ENCODE measurements at regions of chr15 and their contacts with region 1.

Region 1: GRCh38 chr15:99704444-99704838 is 28.8 kb downstream of the LYSMD4 start:
- DNase-seq: peak; percentile 87
- ATAC-seq: peak; percentile 80
- H3K4me3 ChIP-seq: no peak overlapping the region
- H3K4me3 Mint-ChIP-seq: no peak overlapping the region
- H3K27ac ChIP-seq: peak overlapping the region in 1 of 2 donors; percentile 91
- H3K27ac Mint-ChIP-seq: no peak overlapping the region
- H3K4me1 ChIP-seq: peaks cover 15 to 18% of the 10 kb centered on the region in 2 donors
- H3K4me1 Mint-ChIP-seq: peaks cover 28% of the 10 kb centered on the region
- H3K27me3 ChIP-seq: no peaks in the 10 kb centered on the region
- H3K27me3 Mint-ChIP-seq: no peaks in the 10 kb centered on the region
- CTCF ChIP-seq: peak; percentile 76

Region 2: GRCh38 chr15:99275525-99276128 is 428.8 kb before region 1 on chr15:
- CTCF ChIA-PET with region 1: interaction called, 199 read pairs
- POLR2A ChIA-PET with region 1: interaction called, 7 read pairs
- intact Hi-C with region 1: loop called (anchors 1 kb)
- DNase-seq: peak; percentile 22
- ATAC-seq: peak; percentile 17
- H3K4me3 ChIP-seq: no peak overlapping the region
- H3K4me3 Mint-ChIP-seq: no peak overlapping the region
- H3K27ac ChIP-seq: no peak overlapping the region
- H3K27ac Mint-ChIP-seq: no peak overlapping the region
- H3K4me1 ChIP-seq: peaks cover 6 to 10% of the 10 kb centered on the region in 2 donors
- H3K4me1 Mint-ChIP-seq: peaks cover 11% of the 10 kb centered on the region
- H3K27me3 ChIP-seq: no peaks in the 10 kb centered on the region
- H3K27me3 Mint-ChIP-seq: no peaks in the 10 kb centered on the region
- CTCF ChIP-seq: no peak

Region 3: GRCh38 chr15:99371180-99372103 is 333.0 kb before region 1 on chr15:
- CTCF ChIA-PET with region 1: interaction called, 19 read pairs
- POLR2A ChIA-PET with region 1: no interaction called
- intact Hi-C with region 1: no loop called
- DNase-seq: peak; percentile 33
- ATAC-seq: no peak
- H3K4me3 ChIP-seq: no peak overlapping the region
- H3K4me3 Mint-ChIP-seq: peak overlapping the region; percentile 41
- H3K27ac ChIP-seq: no peak overlapping the region
- H3K27ac Mint-ChIP-seq: peak overlapping the region; percentile 32
- H3K4me1 ChIP-seq: peaks cover 6 to 8% of the 10 kb centered on the region in 2 donors
- H3K4me1 Mint-ChIP-seq: peaks cover 13% of the 10 kb centered on the region
- H3K27me3 ChIP-seq: no peaks in the 10 kb centered on the region
- H3K27me3 Mint-ChIP-seq: no peaks in the 10 kb centered on the region
- CTCF ChIP-seq: no peak

Region 4: GRCh38 chr15:99507504-99508310 is 196.7 kb before region 1 on chr15:
- CTCF ChIA-PET with region 1: interaction called, 21 read pairs
- POLR2A ChIA-PET with region 1: no interaction called
- intact Hi-C with region 1: loop called (anchors 5 kb)
- DNase-seq: peak; percentile 47
- ATAC-seq: no peak
- H3K4me3 ChIP-seq: peak overlapping the region in 1 of 5 experiments; percentile 5
- H3K4me3 Mint-ChIP-seq: peak overlapping the region; percentile 79
- H3K27ac ChIP-seq: peak overlapping the region; percentile 50 to 90
- H3K27ac Mint-ChIP-seq: peak overlapping the region; percentile 86
- H3K4me1 ChIP-seq: peaks cover 87 to 88% of the 10 kb centered on the region in 2 donors
- H3K4me1 Mint-ChIP-seq: peaks cover 91% of the 10 kb centered on the region
- H3K27me3 ChIP-seq: no peaks in the 10 kb centered on the region
- H3K27me3 Mint-ChIP-seq: no peaks in the 10 kb centered on the region
- CTCF ChIP-seq: no peak

Region 5: DNA sequence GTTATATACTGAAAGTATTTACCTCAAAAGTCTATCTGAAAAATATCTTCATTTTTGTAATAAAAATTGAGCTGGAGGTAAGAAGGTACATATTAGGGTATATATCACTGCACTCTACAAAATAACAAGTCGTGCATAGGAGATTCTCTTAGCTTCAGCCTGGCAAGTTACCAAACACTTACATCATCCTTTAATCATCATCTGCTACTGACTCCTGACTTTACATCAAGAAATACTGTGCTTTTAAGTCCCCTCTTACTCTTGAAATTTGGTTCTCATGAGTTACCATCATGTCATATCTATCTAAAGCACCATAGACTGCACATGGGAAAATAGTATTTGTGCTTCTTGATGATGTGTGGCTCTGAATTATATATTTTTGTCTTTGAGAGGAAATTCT is 22.0 kb before region 1 on chr15:
- CTCF ChIA-PET with region 1: interaction called, 17 read pairs
- POLR2A ChIA-PET with region 1: no interaction called
- intact Hi-C with region 1: no loop called
- DNase-seq: no peak
- ATAC-seq: no peak
- H3K4me3 ChIP-seq: no peak overlapping the region
- H3K4me3 Mint-ChIP-seq: no peak overlapping the region
- H3K27ac ChIP-seq: peak overlapping the region; percentile 48 to 71
- H3K27ac Mint-ChIP-seq: peak overlapping the region; percentile 18
- H3K4me1 ChIP-seq: peaks cover 16 to 20% of the 10 kb centered on the region in 2 donors
- H3K4me1 Mint-ChIP-seq: peaks cover 50% of the 10 kb centered on the region
- H3K27me3 ChIP-seq: no peaks in the 10 kb centered on the region
- H3K27me3 Mint-ChIP-seq: no peaks in the 10 kb centered on the region
- CTCF ChIP-seq: no peak

Region 6: DNA sequence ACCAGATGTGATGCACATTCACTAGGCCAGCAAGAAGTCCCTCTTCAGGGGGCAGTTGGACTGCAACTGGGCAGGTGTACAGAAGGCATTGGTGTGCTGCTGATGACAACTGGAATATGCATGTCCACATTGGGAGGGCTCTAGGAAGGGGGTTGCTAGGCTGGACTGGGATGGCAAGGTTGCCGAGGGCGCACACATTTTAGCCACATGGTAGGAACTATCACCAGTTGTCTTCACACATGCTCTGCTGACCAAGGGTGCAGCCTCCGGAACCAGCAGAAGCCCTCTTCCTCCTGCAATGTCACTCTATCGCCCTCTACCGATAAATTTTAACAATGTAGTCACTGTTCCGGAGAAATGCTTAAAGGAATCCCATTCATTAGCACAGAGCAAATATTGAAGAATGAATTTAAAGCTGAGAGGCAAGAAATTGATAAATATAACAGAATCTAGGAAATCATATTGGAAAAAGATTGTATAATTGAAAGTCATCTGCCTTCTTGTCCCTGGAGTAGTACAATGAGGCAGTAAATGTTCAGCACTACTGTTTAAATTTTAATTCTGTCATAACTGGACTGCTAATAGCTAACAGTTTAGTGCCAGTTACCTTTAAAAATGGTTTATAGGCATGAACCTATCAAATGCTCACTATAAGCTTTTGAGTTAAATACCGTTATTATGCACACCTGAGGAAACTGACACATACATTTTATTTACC is 51.4 kb after region 1 on chr15:
- CTCF ChIA-PET with region 1: interaction called, 43 read pairs
- POLR2A ChIA-PET with region 1: no interaction called
- intact Hi-C with region 1: loop called (anchors 1 kb)
- DNase-seq: peak; percentile 82
- ATAC-seq: peak; percentile 92
- H3K4me3 ChIP-seq: no peak overlapping the region
- H3K4me3 Mint-ChIP-seq: no peak overlapping the region
- H3K27ac ChIP-seq: no peak overlapping the region
- H3K27ac Mint-ChIP-seq: no peak overlapping the region
- H3K4me1 ChIP-seq: peaks cover 5 to 6% of the 10 kb centered on the region in 2 donors
- H3K4me1 Mint-ChIP-seq: peaks cover 7% of the 10 kb centered on the region
- H3K27me3 ChIP-seq: no peaks in the 10 kb centered on the region
- H3K27me3 Mint-ChIP-seq: peaks cover 3% of the 10 kb centered on the region
- CTCF ChIP-seq: peak; percentile 96

Measured in B cell (primary cell).